Activated CD4-positive, alpha-beta T cell treated with anti-CD3 and anti-CD28 coated beads, Interleukin-2, amount 10 ng/mL, durations not matched to agents 7 days and 5 days (primary cell): ENCODE measurements at regions of chr11 and their contacts with region 1.

Region 1: DNA sequence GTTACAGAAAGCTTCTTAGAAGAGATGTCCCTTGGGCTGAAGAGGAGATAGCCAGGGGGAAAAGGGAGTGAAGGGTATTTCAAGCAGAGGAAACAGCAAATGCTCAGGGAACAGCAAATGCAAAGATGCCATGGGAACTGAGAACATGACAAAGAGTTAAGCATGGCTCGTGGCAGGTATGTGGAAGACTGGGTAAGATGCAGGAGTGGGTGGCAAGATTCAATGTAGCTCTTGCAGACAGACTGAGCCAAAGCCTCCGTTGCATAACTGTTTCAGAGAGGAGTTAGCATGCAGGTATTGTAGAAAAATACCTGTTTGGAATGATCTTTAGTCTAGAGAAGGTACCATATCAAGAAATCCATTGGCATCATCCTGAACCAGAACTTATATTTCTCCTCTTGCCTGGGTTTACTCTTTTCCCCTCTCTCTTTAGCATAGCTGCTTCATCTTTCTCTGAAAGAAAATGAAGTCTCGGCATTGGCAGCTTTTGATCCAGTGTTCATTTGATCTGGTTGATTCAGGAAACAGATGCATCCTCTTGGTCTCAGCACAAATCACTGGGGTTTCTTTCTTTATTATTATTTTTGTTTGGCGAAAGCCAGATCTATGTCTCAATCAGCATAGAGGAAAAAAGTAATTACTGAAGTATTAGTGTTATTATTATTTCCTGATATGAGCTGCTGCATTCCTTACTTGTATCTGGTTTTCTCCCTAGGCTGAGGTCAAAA is 41.7 kb upstream of the NUP160 start:
- DNase-seq: peak; percentile 35
- H3K4me3 Mint-ChIP-seq: peak overlapping the region; percentile 2
- H3K27ac Mint-ChIP-seq: peak overlapping the region; percentile 28
- H3K4me1 Mint-ChIP-seq: peaks cover 45% of the 10 kb centered on the region
- H3K27me3 Mint-ChIP-seq: no peaks in the 10 kb centered on the region

Region 2: GRCh38 chr11:47863189-47863892 is 26.5 kb before region 1 on chr11:
- CTCF ChIA-PET with region 1: interaction called, 3 read pairs
- POLR2A ChIA-PET with region 1: interaction called, 12 read pairs
- DNase-seq: peak; percentile 28
- H3K4me3 Mint-ChIP-seq: peak overlapping the region; percentile 37
- H3K27ac Mint-ChIP-seq: peak overlapping the region; percentile 79
- H3K4me1 Mint-ChIP-seq: peaks cover 45% of the 10 kb centered on the region
- H3K27me3 Mint-ChIP-seq: no peaks in the 10 kb centered on the region

Region 3: DNA sequence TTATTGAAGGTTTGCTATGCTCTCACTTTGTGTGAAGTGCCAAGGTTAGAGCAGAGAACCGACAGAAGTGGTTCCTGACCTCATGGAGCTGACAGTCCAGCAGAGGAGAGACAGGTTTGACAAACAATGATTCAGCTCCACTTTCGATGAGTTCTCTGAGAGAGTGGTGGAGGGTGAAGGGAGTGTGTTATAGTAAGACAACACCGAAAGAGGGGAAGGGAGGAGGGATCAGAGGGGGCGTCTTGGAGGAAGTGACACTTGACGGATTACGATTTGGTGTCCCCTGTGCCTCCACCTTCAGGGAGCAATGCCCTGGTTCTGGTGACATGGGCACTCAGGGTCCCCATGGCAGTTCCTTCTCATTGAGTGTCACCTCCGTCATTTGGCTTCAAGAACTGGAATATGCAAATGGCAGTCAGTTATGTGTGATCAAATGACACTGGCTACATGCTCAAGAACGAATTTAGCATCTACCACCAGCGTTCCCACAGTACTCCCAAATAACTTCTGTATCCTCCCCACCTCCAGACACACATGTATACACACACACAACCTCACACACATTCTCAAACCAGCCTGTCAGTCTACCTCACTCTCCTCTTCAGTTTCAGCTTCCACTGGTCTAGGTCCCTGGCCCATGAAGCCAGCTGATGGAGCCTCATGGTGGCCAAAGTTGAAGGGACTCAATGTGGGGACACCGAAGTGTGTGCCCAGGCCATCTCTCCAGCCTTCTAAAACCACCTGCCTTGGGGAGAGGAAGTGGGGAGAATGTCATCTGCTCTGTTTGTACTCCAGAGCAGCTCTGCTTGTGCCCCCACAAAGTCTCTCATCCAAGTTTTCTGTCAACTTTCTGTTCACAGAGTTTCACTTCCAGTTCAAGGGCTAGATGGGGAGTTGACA is 10.4 kb before region 1 on chr11:
- CTCF ChIA-PET with region 1: no interaction called
- POLR2A ChIA-PET with region 1: no interaction called
- DNase-seq: no peak
- H3K4me3 Mint-ChIP-seq: no peak overlapping the region
- H3K27ac Mint-ChIP-seq: peak overlapping the region; percentile 65
- H3K4me1 Mint-ChIP-seq: peaks cover 21% of the 10 kb centered on the region
- H3K27me3 Mint-ChIP-seq: peaks cover 7% of the 10 kb centered on the region

Region 4: GRCh38 chr11:47905481-47906059 is 15.7 kb after region 1 on chr11:
- CTCF ChIA-PET with region 1: no interaction called
- POLR2A ChIA-PET with region 1: no interaction called
- DNase-seq: no peak
- H3K4me3 Mint-ChIP-seq: no peak overlapping the region
- H3K27ac Mint-ChIP-seq: peak overlapping the region; percentile 15
- H3K4me1 Mint-ChIP-seq: peaks cover 15% of the 10 kb centered on the region
- H3K27me3 Mint-ChIP-seq: no peaks in the 10 kb centered on the region